ENCODE measurements at regions of chr3 and their contacts with region 1.

Region 1: GRCh38 chr3:16511681-16512434 is 1.6 kb downstream of the RFTN1 start:
- DNase-seq: peak; percentile 93
- H3K4me3 Mint-ChIP-seq: peak overlapping the region; percentile 95
- H3K27ac Mint-ChIP-seq: peak overlapping the region; percentile 85
- H3K4me1 Mint-ChIP-seq: peaks cover 64% of the 10 kb centered on the region
- H3K27me3 Mint-ChIP-seq: no peaks in the 10 kb centered on the region

Region 2: DNA sequence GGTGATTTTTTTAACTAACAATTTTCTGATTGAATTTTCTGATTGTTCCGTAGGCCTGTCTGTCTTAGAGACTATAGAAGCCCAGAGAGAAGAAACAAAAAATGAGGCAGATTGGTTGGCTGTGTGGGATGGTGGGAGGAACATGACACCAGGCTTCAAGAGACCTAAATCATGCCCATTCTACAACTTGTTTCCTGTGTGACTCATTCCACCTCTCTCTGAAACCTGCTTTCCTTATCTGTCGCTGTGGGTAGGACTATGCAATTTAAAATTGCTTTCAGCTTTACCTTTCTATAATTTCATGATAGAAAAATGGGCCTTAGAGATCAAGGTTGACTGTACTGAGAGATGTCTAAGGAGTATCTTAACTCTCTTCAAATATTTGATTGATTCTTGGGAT is 202.3 kb before region 1 on chr3:
- intact Hi-C with region 1: loop called (anchors 2 kb)
- DNase-seq: peak; percentile 87
- H3K4me3 Mint-ChIP-seq: peak overlapping the region; percentile 61
- H3K27ac Mint-ChIP-seq: peak overlapping the region; percentile 89
- H3K4me1 Mint-ChIP-seq: peaks cover 80% of the 10 kb centered on the region
- H3K27me3 Mint-ChIP-seq: no peaks in the 10 kb centered on the region

Region 3: DNA sequence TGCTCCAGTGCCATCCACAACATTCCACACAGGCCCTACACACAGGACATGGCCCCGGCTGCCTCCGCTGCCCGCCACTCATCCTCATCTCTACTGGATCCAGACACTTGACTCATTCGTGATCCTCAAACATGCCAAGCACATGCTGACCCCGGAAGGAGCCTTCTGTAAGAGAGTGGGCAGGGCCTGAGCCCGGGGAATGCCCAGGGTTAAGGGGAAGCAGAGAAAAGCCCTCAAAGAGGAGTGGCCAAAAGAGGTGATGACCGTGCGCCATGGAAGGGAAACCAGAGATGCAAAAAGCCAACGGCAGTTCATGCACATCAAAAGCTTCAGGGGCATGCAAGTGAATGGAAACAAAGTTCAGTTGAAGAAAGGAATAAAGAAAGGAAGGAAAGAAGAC is 44.5 kb before region 1 on chr3:
- intact Hi-C with region 1: loop called (anchors 2 kb)
- DNase-seq: peak; percentile 88
- H3K4me3 Mint-ChIP-seq: peak overlapping the region; percentile 78
- H3K27ac Mint-ChIP-seq: peak overlapping the region; percentile 94
- H3K4me1 Mint-ChIP-seq: peaks cover 64% of the 10 kb centered on the region
- H3K27me3 Mint-ChIP-seq: no peaks in the 10 kb centered on the region

Region 4: GRCh38 chr3:16496408-16497222 is 15.2 kb before region 1 on chr3:
- intact Hi-C with region 1: loop called (anchors 2 kb)
- DNase-seq: no peak
- H3K4me3 Mint-ChIP-seq: peak overlapping the region; percentile 39
- H3K27ac Mint-ChIP-seq: peak overlapping the region; percentile 72
- H3K4me1 Mint-ChIP-seq: peaks cover 57% of the 10 kb centered on the region
- H3K27me3 Mint-ChIP-seq: no peaks in the 10 kb centered on the region

Region 5: GRCh38 chr3:17151598-17152373 is 639.9 kb after region 1 on chr3:
- intact Hi-C with region 1: loop called (anchors 5 kb)
- DNase-seq: peak; percentile 97
- H3K4me3 Mint-ChIP-seq: peak overlapping the region; percentile 80
- H3K27ac Mint-ChIP-seq: peak overlapping the region; percentile 93
- H3K4me1 Mint-ChIP-seq: peaks cover 66% of the 10 kb centered on the region
- H3K27me3 Mint-ChIP-seq: no peaks in the 10 kb centered on the region

Measured in activated CD4-positive, alpha-beta T cell treated with anti-CD3 and anti-CD28 coated beads, Interleukin-2, amount 10 ng/mL, durations not matched to agents 24 days and 14 days (primary cell).